ENCODE measurements at regions of chr4 and their contacts with region 1.

Region 1: DNA sequence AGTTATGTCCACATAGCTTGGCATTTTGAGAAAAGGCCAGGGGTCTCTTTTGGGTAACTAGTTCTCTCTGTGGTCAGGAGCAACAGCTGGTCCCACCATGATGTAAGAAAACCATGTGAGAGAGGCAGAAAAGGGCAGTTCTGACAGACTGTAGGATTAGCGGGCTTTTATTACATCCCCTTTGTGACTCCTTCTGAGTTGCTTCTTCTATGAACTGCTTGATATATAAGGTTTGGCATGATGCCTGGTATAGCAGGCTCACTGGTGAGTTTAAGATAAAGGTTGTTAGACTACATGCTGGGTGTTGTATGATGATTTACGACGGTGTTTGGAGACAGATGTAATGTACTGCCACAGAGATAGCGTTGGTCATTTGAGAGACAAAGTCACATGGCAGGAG is 2308.1 kb upstream of the AGA start:
- DNase-seq: no peak
- ATAC-seq: no peak

Region 2: GRCh38 chr4:179605196-179605595 is 145.2 kb before region 1 on chr4:
- intact Hi-C with region 1: no loop called
- DNase-seq: no peak
- ATAC-seq: no peak

Region 3: GRCh38 chr4:179738822-179739221 is 11.6 kb before region 1 on chr4:
- intact Hi-C with region 1: loop called (anchors 1 kb)
- DNase-seq: no peak
- ATAC-seq: no peak